WTC11 (cell line): ENCODE measurements at regions of chr1 and their contacts with region 1.

Region 1: GRCh38 chr1:9066945-9067807 is 2.3 kb downstream of the SLC2A5 start:
- DNase-seq: no peak
- ATAC-seq: no peak
- H3K4me3 Mint-ChIP-seq: no peak overlapping the region
- H3K27ac Mint-ChIP-seq: no peak overlapping the region
- H3K4me1 Mint-ChIP-seq: peaks cover 23% of the 10 kb centered on the region
- H3K27me3 Mint-ChIP-seq: no peaks in the 10 kb centered on the region
- CTCF ChIP-seq: no peak

Region 2: GRCh38 chr1:8702850-8703810 is 364.0 kb before region 1 on chr1:
- CTCF ChIA-PET with region 1: no interaction called
- POLR2A ChIA-PET with region 1: no interaction called
- DNase-seq: peak; percentile 87
- ATAC-seq: peak; percentile 86
- H3K4me3 Mint-ChIP-seq: peak overlapping the region; percentile 92
- H3K27ac Mint-ChIP-seq: peak overlapping the region; percentile 95
- H3K4me1 Mint-ChIP-seq: peaks cover 65% of the 10 kb centered on the region
- H3K27me3 Mint-ChIP-seq: no peaks in the 10 kb centered on the region
- CTCF ChIP-seq: no peak

Region 3: DNA sequence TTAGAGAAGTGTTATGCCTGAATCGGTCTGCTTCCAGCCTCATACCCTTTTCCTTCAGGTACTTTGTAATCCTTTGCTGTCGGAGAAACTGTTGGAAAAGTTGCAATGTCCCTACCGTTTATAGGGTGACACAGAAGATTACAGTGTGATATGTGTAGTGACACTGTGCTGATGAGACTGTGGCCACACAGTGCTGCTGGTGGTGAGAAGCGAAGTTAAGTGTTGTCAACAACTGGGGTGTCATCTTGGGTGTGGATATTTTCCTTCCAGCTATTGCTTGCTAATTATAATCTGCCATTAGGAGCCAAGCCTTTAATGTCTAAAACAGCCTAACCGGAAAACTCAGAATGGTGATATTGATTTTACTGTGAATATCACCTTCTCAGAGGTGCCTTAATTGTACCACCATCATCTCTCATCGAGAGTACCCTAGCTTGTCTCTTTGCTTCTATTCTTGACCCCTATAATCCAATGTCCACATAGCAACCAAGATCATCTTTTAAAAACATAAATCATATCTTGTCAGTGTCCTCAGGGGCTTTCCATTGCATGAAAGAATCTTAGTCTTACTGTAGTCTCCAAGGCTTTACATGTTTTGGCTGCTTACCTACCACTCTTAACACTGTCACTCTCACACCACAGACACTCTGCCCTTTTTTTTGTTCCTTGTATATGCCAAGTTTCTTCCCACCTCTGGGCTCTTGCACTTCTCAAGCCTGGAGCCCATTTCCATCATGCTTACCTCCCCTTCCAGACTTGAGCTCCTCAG is 1242.3 kb after region 1 on chr1:
- CTCF ChIA-PET with region 1: no interaction called
- POLR2A ChIA-PET with region 1: interaction called, 14 read pairs
- DNase-seq: no peak
- ATAC-seq: no peak
- H3K4me3 Mint-ChIP-seq: no peak overlapping the region
- H3K27ac Mint-ChIP-seq: no peak overlapping the region
- H3K4me1 Mint-ChIP-seq: no peaks in the 10 kb centered on the region
- H3K27me3 Mint-ChIP-seq: no peaks in the 10 kb centered on the region
- CTCF ChIP-seq: no peak